Vagina (tissue), 2 donors: ENCODE measurements at regions of chr2 and their contacts with region 1.

Region 1: DNA sequence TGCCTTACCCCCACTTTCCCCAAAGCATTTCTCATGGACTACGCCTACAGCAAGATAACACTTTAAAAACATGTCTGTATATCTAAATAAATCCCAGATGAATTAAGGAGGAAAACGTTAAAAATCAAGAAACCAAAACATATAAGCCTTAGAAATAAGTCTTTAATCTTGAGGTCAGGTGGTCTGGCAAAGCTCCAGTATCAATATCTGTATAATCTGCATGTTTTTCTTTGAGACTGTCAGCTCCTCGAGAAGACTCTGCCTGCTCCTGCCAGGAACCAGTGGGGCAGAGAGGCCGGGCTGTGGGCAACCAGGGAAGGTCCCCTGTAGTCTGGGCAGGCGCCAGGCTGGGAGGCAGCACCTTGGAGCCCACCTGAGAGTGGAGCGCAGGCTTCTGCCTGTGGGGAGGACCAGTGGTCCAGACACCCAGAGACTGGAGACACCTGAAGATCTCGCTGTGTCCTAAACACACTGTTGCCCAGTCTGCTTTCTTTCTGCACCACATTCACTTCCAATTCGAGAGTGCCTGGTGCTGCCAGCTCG is 291.0 kb upstream of the SOX11 start:
- DNase-seq: no peak
- H3K4me3 ChIP-seq: no peak overlapping the region
- H3K27ac ChIP-seq: no peak overlapping the region
- H3K4me1 ChIP-seq: no peaks in the 10 kb centered on the region
- H3K27me3 ChIP-seq: no peaks in the 10 kb centered on the region
- CTCF ChIP-seq: no peak
- POLR2A ChIP-seq: no peak

Region 2: DNA sequence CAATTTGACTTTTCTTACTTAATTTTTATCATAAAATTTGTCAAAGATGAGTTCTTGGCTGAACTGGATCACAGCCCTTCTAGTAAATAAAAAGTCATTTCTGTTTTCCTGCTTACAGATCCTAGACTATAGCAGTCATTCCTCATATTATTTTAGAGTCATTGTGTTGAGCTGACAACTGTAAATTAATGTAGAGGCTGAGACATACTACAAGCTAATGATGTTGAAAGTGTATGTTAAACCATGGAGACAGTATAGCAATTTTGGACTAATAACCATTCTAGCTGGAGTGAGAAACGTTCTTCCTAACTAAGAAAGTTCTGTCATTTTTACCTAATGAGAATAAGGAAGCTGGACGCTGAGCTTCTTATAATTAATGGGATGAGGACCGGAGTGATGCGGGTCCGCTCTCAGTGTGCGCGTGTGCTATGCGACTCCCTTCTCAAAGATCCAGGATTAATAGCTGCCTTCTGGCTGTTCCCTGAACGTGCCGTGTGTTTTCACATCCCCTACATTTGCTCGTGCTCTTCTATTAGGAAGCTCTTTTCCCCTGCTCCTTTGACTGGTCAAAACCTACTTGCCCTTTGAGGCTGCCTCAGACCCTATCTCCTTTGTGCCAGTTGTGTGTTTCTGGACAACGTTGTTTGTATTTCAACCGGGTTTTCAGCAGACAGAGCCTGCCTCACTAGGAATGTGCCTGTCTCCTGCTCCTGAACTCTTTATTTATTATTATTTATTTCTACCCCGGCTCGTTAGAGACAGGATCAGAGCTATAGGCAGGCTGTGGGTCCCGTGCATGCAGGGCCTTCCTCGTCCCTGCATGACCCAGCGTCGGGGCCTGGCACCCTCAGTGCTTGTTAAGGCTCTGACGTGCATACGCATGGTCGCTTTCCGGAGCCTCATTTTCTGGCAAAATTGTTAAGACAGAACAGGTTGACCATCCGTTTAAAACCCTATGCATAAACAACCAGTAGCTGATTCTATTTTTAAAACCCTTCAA is 1515.3 kb before region 1 on chr2:
- intact Hi-C with region 1: loop called (anchors 5 kb)
- DNase-seq: no peak
- H3K4me3 ChIP-seq: no peak overlapping the region
- H3K27ac ChIP-seq: no peak overlapping the region
- H3K4me1 ChIP-seq: no peaks in the 10 kb centered on the region
- H3K27me3 ChIP-seq: no peaks in the 10 kb centered on the region
- CTCF ChIP-seq: no peak
- POLR2A ChIP-seq: no peak

Region 3: GRCh38 chr2:5387421-5387820 is 13.8 kb before region 1 on chr2:
- intact Hi-C with region 1: no loop called
- DNase-seq: no peak
- H3K4me3 ChIP-seq: no peak overlapping the region
- H3K27ac ChIP-seq: no peak overlapping the region
- H3K4me1 ChIP-seq: no peaks in the 10 kb centered on the region
- H3K27me3 ChIP-seq: no peaks in the 10 kb centered on the region
- CTCF ChIP-seq: no peak
- POLR2A ChIP-seq: no peak